ENCODE measurements at regions of chr1 and their contacts with region 1.

Region 1: GRCh38 chr1:156659994-156660751 is 17.0 kb downstream of the NES start:
- DNase-seq: peak; percentile 87
- ATAC-seq: peak; percentile 85
- H3K4me3 Mint-ChIP-seq: peak overlapping the region; percentile 62
- H3K27ac Mint-ChIP-seq: peak overlapping the region; percentile 63
- H3K4me1 Mint-ChIP-seq: peaks cover 90% of the 10 kb centered on the region
- H3K27me3 Mint-ChIP-seq: peaks cover 22% of the 10 kb centered on the region
- CTCF ChIP-seq: peak; percentile 66

Region 2: GRCh38 chr1:154974063-154974807 is 1685.9 kb before region 1 on chr1 and contains the start of gene CKS1B:
- CTCF ChIA-PET with region 1: no interaction called
- POLR2A ChIA-PET with region 1: interaction called, 10 read pairs
- intact Hi-C with region 1: no loop called
- DNase-seq: peak; percentile 87
- ATAC-seq: peak; percentile 83
- H3K4me3 Mint-ChIP-seq: no peak within 1 kb of the TSS
- H3K27ac Mint-ChIP-seq: no peak within 1 kb of the TSS
- H3K4me1 Mint-ChIP-seq: peaks cover 36% of the 10 kb centered on the region
- H3K27me3 Mint-ChIP-seq: no peaks in the 10 kb centered on the region
- CTCF ChIP-seq: no peak
- total RNA-seq, gene CKS1B: 25.3 and 26.6 TPM in 2 replicates

Region 3: DNA sequence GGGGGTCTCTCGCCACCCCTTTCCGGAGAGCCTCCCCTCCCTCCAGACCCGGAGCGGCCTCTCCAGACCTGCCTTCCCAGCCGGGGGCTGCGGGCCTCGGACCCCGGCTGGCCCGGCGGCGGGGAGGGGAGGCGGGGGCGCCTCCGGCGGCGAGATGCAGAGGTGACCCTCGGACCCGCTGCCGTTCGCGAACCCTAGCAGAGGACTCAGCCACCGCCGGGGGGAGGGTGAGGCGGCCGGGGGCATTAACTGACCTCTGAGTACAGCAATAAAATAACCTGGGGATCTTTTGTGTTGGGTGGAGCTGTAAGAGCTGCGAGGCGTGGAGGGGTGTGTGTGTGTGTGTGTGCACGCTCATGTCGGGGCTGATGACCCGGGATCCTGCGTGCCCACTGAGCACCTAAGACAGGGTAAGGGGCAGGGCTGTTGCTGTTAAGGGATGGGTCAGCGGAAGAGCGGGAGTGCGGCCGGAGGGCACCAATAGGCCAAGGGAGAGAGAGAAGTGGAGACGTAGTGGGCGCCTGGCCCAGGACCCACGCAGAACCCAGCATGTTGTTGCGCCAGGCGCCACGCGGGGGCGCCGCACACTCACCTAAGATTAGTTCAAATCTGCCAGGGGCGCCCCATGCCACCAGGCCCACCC is 34.6 kb before region 1 on chr1:
- CTCF ChIA-PET with region 1: interaction called, 34 read pairs
- POLR2A ChIA-PET with region 1: interaction called, 3 read pairs
- intact Hi-C with region 1: loop called (anchors 1 kb)
- DNase-seq: peak; percentile 66
- ATAC-seq: peak; percentile 71
- H3K4me3 Mint-ChIP-seq: peak overlapping the region; percentile 74
- H3K27ac Mint-ChIP-seq: peak overlapping the region; percentile 3
- H3K4me1 Mint-ChIP-seq: peaks cover 12% of the 10 kb centered on the region
- H3K27me3 Mint-ChIP-seq: peaks cover 32% of the 10 kb centered on the region
- CTCF ChIP-seq: peak; percentile 27

Region 4: DNA sequence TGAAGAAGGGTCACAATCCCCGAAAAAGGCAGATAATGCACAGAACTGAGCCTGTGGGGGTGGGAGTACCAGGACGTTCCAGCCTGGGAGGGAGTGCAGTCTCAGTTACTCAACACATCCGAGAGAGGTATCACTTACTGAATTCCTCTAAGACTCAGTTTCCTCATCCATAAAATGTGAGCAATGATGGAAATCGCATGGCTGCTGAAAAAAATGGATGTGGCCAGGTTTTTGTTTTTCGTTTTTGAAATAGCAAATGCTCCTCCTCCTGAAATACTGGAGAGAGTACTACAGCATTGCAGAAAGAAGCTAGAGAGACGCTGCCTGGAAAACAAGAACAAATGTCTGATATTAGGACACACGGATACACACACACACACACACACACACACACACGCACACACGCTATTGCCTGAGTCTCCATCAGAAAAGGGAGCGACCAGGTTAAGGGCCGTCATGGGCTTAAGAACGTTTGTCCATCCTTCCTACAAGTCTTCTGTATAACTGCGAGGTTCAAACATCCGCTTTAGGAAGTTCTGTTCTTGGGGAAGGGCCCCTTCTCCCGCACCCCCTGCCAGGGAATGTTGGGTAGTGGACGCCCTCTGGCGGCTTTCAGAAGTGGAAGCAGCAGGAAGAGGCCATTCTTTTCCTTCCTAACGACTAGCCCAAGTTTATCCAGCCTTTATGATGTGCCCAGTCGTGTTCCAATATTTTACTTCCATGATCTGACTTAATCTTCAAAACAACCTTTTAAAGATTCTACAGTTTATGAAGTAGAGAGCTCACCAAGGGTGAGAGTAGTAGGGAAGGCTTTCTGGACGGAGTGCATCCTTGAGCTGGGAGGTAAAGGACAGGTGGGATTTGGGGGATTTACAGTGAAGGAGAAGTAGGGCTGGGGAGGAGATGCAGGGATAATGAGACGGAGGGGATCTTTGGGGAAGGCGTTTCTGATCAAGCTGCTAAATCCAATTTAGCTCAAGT is 17.7 kb after region 1 on chr1:
- CTCF ChIA-PET with region 1: interaction called, 10 read pairs
- POLR2A ChIA-PET with region 1: interaction called, 3 read pairs
- intact Hi-C with region 1: loop called (anchors 1 kb)
- DNase-seq: no peak
- ATAC-seq: peak; percentile 49
- H3K4me3 Mint-ChIP-seq: peak overlapping the region; percentile 32
- H3K27ac Mint-ChIP-seq: no peak overlapping the region
- H3K4me1 Mint-ChIP-seq: peaks cover 27% of the 10 kb centered on the region
- H3K27me3 Mint-ChIP-seq: peaks cover 69% of the 10 kb centered on the region
- CTCF ChIP-seq: no peak

Region 5: DNA sequence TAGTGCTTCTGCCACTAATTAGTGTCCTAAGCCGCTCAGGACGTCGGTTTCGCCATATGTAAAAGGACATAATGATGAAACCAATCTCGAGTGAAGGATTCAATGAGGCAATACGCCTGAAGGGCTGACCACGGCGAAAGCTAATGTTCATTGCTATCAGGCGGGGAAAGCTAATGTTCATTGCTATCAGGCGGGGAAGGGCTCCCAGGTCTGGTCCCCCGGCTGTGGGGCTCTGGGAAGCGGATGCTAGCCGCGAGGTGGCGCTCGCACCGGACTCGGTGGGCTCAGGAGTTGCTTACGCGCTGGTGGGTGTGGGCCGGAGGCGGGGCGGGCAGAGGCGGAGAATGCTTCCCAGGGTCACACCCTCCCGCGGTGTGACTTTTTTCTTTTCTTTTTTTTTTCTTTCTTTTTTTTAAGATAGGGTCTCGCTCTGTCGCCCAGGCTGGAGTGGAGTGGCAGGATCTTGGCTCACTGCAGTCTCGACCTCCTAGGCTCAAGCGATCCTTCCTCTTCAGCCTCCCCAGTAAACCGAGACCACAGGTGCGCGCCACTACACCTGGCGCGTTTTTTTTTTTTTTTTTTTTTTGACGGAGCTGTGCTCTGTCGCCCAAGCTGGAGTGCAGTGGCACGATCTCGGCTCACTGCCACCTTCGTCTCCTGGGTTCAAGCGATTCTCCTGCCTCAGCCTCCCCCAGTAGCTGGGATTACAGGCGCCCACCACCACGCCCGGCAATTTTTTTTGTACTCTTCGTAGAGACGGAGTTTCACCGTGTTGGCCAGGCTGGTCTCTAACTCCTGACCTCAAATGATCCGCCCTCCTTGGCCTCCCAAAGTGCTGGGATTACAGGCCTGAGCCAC is 232.2 kb after region 1 on chr1:
- CTCF ChIA-PET with region 1: no interaction called
- POLR2A ChIA-PET with region 1: no interaction called
- intact Hi-C with region 1: loop called (anchors 1 kb)
- DNase-seq: peak; percentile 70
- ATAC-seq: peak; percentile 90
- H3K4me3 Mint-ChIP-seq: peak overlapping the region; percentile 61
- H3K27ac Mint-ChIP-seq: no peak overlapping the region
- H3K4me1 Mint-ChIP-seq: peaks cover 9% of the 10 kb centered on the region
- H3K27me3 Mint-ChIP-seq: peaks cover 64% of the 10 kb centered on the region
- CTCF ChIP-seq: peak; percentile 32

Measured in activated B cell treated with CpG ODN at 0.5 μM for 24 hours (primary cell).